PC-3 (cell line): ENCODE measurements at regions of chr5 and their contacts with region 1.

Region 1: GRCh38 chr5:64958757-64959391 is 190.1 kb downstream of the CWC27 start:
- DNase-seq: peak; percentile 49
- ATAC-seq: no peak
- H3K4me3 ChIP-seq: no peak overlapping the region
- H3K27ac ChIP-seq: no peak overlapping the region
- H3K4me1 ChIP-seq: no peaks in the 10 kb centered on the region
- H3K27me3 ChIP-seq: no peaks in the 10 kb centered on the region
- CTCF ChIP-seq: peak; percentile 67

Region 2: DNA sequence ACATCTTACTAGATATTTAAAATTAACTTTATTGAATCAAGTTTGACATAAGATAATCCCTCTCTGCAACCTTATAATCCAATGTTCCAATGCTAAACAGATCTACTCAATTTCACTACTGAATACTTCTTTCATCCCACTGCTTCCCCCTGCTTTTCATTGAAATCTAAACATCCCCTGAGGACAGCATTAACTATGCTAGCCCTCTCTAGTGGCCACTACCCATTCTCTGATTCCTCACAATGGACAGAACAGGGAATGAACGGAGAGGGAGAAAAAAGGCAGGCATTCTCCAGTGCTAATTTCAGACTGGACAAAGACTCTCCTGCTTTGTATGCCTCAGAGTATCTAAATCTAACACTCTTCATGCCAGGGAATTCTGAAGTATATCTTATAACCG is 507.3 kb before region 1 on chr5:
- CTCF ChIA-PET with region 1: no interaction called
- POLR2A ChIA-PET with region 1: no interaction called
- intact Hi-C with region 1: no loop called
- DNase-seq: no peak
- ATAC-seq: no peak
- H3K4me3 ChIP-seq: no peak overlapping the region
- H3K27ac ChIP-seq: no peak overlapping the region
- H3K4me1 ChIP-seq: peaks cover 14% of the 10 kb centered on the region
- H3K27me3 ChIP-seq: no peaks in the 10 kb centered on the region
- CTCF ChIP-seq: 0 out of 2 replicates have a peak, but pooled peaks have one; percentile 13

Region 3: GRCh38 chr5:64869419-64869818 is 89.5 kb before region 1 on chr5:
- CTCF ChIA-PET with region 1: no interaction called
- POLR2A ChIA-PET with region 1: no interaction called
- intact Hi-C with region 1: no loop called
- DNase-seq: peak; percentile 58
- ATAC-seq: peak; percentile 86
- H3K4me3 ChIP-seq: no peak overlapping the region
- H3K27ac ChIP-seq: no peak overlapping the region
- H3K4me1 ChIP-seq: peaks cover 14% of the 10 kb centered on the region
- H3K27me3 ChIP-seq: no peaks in the 10 kb centered on the region
- CTCF ChIP-seq: no peak

Region 4: DNA sequence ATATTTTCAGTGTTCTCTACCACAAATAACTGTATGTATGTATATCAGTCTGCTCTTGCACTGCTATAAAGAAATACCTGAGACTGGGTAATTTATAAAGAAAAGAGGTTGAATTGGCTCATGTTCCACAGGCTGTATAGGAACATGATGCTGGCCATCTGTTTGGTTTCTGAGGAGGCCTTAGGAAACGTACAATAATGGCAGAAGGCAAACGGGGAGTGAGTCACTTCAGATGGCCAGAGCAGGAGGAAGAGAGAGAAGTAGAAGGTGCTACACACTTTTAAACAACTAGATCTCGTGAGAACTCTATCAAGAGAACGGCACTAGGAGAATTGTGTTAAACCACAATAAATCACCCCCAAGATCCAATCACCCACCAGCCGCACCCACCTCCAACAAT is 401.1 kb after region 1 on chr5:
- CTCF ChIA-PET with region 1: no interaction called
- POLR2A ChIA-PET with region 1: no interaction called
- intact Hi-C with region 1: loop called (anchors 10 kb)
- DNase-seq: no peak
- ATAC-seq: no peak
- H3K4me3 ChIP-seq: no peak overlapping the region
- H3K27ac ChIP-seq: no peak overlapping the region
- H3K4me1 ChIP-seq: no peaks in the 10 kb centered on the region
- H3K27me3 ChIP-seq: no peaks in the 10 kb centered on the region
- CTCF ChIP-seq: no peak

Region 5: GRCh38 chr5:65481635-65482295 is 522.9 kb after region 1 on chr5 and contains the start of gene ADAMTS6:
- CTCF ChIA-PET with region 1: interaction called, 4 read pairs
- POLR2A ChIA-PET with region 1: no interaction called
- intact Hi-C with region 1: loop called (anchors 1 kb)
- DNase-seq: peak; percentile 59
- ATAC-seq: peak; percentile 65
- H3K4me3 ChIP-seq: peak within 1 kb of the TSS; percentile 79
- H3K27ac ChIP-seq: peak within 1 kb of the TSS; percentile 48
- H3K4me1 ChIP-seq: peaks cover 7% of the 10 kb centered on the region; the same call in 1 of the 2 replicates
- H3K27me3 ChIP-seq: no peaks in the 10 kb centered on the region
- CTCF ChIP-seq: no peak
- total RNA-seq, gene ADAMTS6: 1.5 and 1.7 TPM in 2 replicates